CD8-positive, alpha-beta T cell (primary cell): ENCODE measurements at regions of chr20 and their contacts with region 1.

Region 1: GRCh38 chr20:1299522-1299921 is 29.4 kb downstream of the SDCBP2 start:
- DNase-seq: peak in 7 of 9 experiments; percentile 16 to 56 (median 42)
- ATAC-seq: peak; percentile 53
- H3K4me3 ChIP-seq: no peak overlapping the region
- H3K4me3 Mint-ChIP-seq: peak overlapping the region; percentile 57
- H3K27ac ChIP-seq: no peak overlapping the region
- H3K27ac Mint-ChIP-seq: peak overlapping the region; percentile 60
- H3K4me1 ChIP-seq: peaks cover 29% of the 10 kb centered on the region
- H3K4me1 Mint-ChIP-seq: peaks cover 29% of the 10 kb centered on the region
- H3K27me3 ChIP-seq: no peaks in the 10 kb centered on the region
- H3K27me3 Mint-ChIP-seq: no peaks in the 10 kb centered on the region
- CTCF ChIP-seq: peak; percentile 41

Region 2: DNA sequence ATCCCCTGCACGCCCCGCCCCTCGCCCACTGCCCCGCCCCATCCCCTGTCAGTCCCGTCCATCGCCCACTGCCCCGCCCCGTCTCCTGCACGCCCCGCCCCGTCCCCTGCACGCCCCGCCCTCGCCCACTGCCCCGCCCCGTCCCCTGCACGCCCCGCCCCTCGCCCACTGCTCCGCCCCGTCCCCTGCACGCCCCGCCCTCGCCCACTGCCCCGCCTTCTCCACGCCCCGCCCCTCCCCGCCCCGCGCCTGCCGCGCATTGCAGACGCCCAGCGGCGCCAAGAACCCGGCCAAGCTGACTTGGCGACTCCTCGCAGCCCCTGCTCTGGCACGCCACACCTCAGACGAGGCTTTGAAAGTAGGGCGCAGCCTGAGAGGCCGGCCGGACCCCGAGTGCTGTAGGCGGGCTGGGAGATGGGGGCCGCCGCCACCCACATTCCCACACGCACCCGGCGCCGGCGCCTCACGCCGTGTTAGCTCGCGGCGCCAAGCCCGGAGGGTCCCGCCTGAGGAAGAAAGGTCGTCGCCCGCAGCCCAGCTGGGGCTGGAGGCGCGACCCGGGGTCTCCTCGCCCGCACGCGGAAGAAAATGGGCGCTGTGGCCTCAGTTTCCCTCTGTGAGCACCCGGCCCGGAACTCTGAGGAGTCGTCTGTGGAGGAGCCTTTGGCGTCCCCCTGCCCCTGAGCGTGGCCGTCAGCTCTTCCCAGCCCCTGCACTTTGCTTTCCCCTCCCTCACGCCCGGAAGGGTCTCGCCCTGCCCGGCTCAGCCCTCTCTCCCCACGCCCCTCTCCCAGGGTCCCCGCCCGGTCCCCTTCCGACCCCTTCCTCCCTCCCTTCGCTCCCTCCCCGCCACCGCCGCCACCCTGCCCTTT is 73.5 kb before region 1 on chr20 and contains the start of gene RAD21L1:
- CTCF ChIA-PET with region 1: interaction called, 9 read pairs
- POLR2A ChIA-PET with region 1: no interaction called
- intact Hi-C with region 1: loop called in 1 of 2 experiments (anchors 2 kb)
- DNase-seq: peak; percentile 63 to 85 (median 80)
- ATAC-seq: peak; percentile 93
- H3K4me3 ChIP-seq: peak within 1 kb of the TSS; percentile 64 to 82
- H3K4me3 Mint-ChIP-seq: peak within 1 kb of the TSS; percentile 87
- H3K27ac ChIP-seq: peak within 1 kb of the TSS in 1 of 2 experiments; percentile 44
- H3K27ac Mint-ChIP-seq: no peak within 1 kb of the TSS
- H3K4me1 ChIP-seq: peaks cover 9% of the 10 kb centered on the region
- H3K4me1 Mint-ChIP-seq: peaks cover 18% of the 10 kb centered on the region
- H3K27me3 ChIP-seq: peaks cover 0 to 8% of the 10 kb centered on the region in 2 experiments
- H3K27me3 Mint-ChIP-seq: peaks cover 13% of the 10 kb centered on the region
- CTCF ChIP-seq: no peak
- total RNA-seq, gene RAD21L1: not detected

Region 3: GRCh38 chr20:1281279-1282057 is 18.1 kb before region 1 on chr20:
- CTCF ChIA-PET with region 1: interaction called, 11 read pairs
- POLR2A ChIA-PET with region 1: interaction called, 8 read pairs
- intact Hi-C with region 1: loop called in 1 of 2 experiments (anchors 2 kb)
- DNase-seq: peak in 1 of 9 experiments; percentile 6
- ATAC-seq: peak; percentile 38
- H3K4me3 ChIP-seq: no peak overlapping the region
- H3K4me3 Mint-ChIP-seq: peak overlapping the region; percentile 40
- H3K27ac ChIP-seq: peak overlapping the region in 1 of 2 experiments; percentile 31
- H3K27ac Mint-ChIP-seq: peak overlapping the region; percentile 72
- H3K4me1 ChIP-seq: peaks cover 64% of the 10 kb centered on the region
- H3K4me1 Mint-ChIP-seq: peaks cover 63% of the 10 kb centered on the region
- H3K27me3 ChIP-seq: no peaks in the 10 kb centered on the region
- H3K27me3 Mint-ChIP-seq: no peaks in the 10 kb centered on the region
- CTCF ChIP-seq: no peak

Region 4: GRCh38 chr20:1325173-1326030 is 25.9 kb after region 1 on chr20:
- CTCF ChIA-PET with region 1: interaction called, 5 read pairs
- POLR2A ChIA-PET with region 1: no interaction called
- intact Hi-C with region 1: loop called (anchors 1 kb)
- DNase-seq: peak; percentile 98 to 100 (median 99)
- ATAC-seq: peak; percentile 86
- H3K4me3 ChIP-seq: peak overlapping the region; percentile 81 to 97
- H3K4me3 Mint-ChIP-seq: no peak overlapping the region
- H3K27ac ChIP-seq: peak overlapping the region; percentile 94 to 99
- H3K27ac Mint-ChIP-seq: no peak overlapping the region
- H3K4me1 ChIP-seq: peaks cover 38% of the 10 kb centered on the region
- H3K4me1 Mint-ChIP-seq: peaks cover 20% of the 10 kb centered on the region
- H3K27me3 ChIP-seq: no peaks in the 10 kb centered on the region
- H3K27me3 Mint-ChIP-seq: no peaks in the 10 kb centered on the region
- CTCF ChIP-seq: no peak

Region 5: GRCh38 chr20:1335961-1336698 is 36.6 kb after region 1 on chr20:
- CTCF ChIA-PET with region 1: no interaction called
- POLR2A ChIA-PET with region 1: no interaction called
- intact Hi-C with region 1: no loop called
- DNase-seq: peak in 1 of 9 experiments; percentile 37
- ATAC-seq: no peak
- H3K4me3 ChIP-seq: no peak overlapping the region
- H3K4me3 Mint-ChIP-seq: no peak overlapping the region
- H3K27ac ChIP-seq: no peak overlapping the region
- H3K27ac Mint-ChIP-seq: peak overlapping the region; percentile 92
- H3K4me1 ChIP-seq: peaks cover 17% of the 10 kb centered on the region
- H3K4me1 Mint-ChIP-seq: peaks cover 27% of the 10 kb centered on the region
- H3K27me3 ChIP-seq: no peaks in the 10 kb centered on the region
- H3K27me3 Mint-ChIP-seq: no peaks in the 10 kb centered on the region
- CTCF ChIP-seq: no peak